GM12878 (cell line): ENCODE measurements at regions of chr11 and their contacts with region 1.

Region 1: GRCh38 chr11:27209562-27210005 is 153.4 kb downstream of the CCDC34 start:
- DNase-seq: no peak
- ATAC-seq: peak; percentile 65
- H3K4me3 ChIP-seq: no peak overlapping the region
- H3K27ac ChIP-seq: no peak overlapping the region
- H3K4me1 ChIP-seq: no peaks in the 10 kb centered on the region
- H3K27me3 ChIP-seq: no peaks in the 10 kb centered on the region
- CTCF ChIP-seq: no peak
- EP300 ChIP-seq: no peak
- POLR2A ChIP-seq: no peak
- RAD21 ChIP-seq: no peak

Region 2: DNA sequence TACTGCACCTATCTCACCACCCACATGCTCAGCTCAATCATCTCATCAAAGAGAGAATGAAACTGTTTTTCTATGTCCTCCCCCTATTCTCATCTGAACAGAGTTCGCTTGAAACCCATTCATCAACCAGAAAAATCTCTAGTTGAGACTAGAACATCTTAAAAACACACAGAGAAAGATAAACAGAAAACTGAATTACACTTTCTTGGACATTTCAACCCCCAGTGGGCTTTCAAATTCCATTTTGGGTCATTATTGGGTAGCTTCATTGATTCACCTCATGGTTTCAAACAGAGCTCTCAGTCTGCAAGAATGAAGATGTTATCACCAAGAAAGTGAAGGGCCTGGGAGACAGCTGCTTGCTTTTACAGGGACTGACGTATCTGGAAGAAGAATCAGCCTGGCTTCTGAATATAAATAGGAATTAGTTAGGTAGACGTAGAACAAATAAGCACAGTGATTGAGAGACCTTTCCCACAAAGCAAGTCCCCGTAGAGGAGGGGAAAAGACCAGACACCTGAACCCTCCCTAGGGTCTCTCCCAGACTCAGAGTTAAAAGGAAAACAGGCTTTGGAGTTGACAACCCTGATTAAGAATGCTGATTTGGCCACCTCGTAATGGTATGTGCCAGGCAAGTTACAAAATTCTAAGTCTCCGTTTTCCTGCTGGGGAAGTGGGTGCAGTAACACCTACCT is 13.2 kb before region 1 on chr11:
- CTCF ChIA-PET with region 1: interaction called, 12 read pairs
- POLR2A ChIA-PET with region 1: interaction called, 4 read pairs
- RAD21 ChIA-PET with region 1: interaction called, 5 read pairs
- SMC1A ChIA-PET with region 1: interaction called, 6 read pairs
- in situ Hi-C with region 1: no loop called
- intact Hi-C with region 1: no loop called
- DNase-seq: no peak
- ATAC-seq: no peak
- H3K4me3 ChIP-seq: no peak overlapping the region
- H3K27ac ChIP-seq: no peak overlapping the region
- H3K4me1 ChIP-seq: no peaks in the 10 kb centered on the region
- H3K27me3 ChIP-seq: no peaks in the 10 kb centered on the region
- CTCF ChIP-seq: no peak
- EP300 ChIP-seq: no peak
- POLR2A ChIP-seq: no peak
- RAD21 ChIP-seq: no peak